ENCODE measurements at regions of chr2 and their contacts with region 1.

Region 1: GRCh38 chr2:172806493-172806892 is 70.8 kb downstream of the RAPGEF4 start:
- DNase-seq: peak; percentile 27 to 71
- H3K4me3 ChIP-seq: no peak overlapping the region
- H3K4me1 ChIP-seq: peaks cover 7% of the 10 kb centered on the region; the same call in 1 of the 2 replicates
- H3K27me3 ChIP-seq: no peaks in the 10 kb centered on the region

Region 2: DNA sequence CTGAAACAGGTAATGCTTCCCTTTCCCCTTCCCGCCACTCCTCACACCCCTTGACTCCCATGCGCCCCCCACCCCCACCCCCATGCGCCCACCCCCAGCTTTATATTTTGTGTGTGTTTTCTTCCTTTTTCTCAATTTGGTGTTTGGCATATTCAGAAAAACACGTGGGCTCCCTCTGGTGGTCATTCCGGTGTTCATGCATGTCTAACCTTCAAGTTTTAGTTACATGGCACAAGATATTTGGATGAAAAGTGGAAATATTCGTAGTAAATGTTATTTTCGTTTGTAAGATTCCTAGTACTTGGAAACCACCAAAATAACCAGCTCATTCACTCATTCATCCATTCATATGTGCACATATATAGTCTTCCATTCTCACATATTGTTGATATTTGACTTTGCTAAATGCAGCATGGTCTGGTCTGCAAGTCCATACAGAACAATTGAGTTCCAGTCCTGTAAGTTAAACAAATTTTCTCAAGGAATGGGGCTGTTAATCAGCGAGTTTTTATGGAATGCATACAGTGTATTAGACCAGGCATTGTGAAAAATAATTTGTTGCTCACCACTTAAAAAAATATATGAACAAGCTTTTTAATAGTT is 125.5 kb after region 1 on chr2:
- in situ Hi-C with region 1: loop called (anchors 5 kb)
- DNase-seq: peak; percentile 59 to 86
- H3K4me3 ChIP-seq: no peak overlapping the region
- H3K4me1 ChIP-seq: peaks cover 23% of the 10 kb centered on the region
- H3K27me3 ChIP-seq: no peaks in the 10 kb centered on the region

Region 3: GRCh38 chr2:173210270-173211196 is 404.0 kb after region 1 on chr2:
- in situ Hi-C with region 1: loop called (anchors 25 kb)
- DNase-seq: peak; percentile 74 to 77
- H3K4me3 ChIP-seq: no peak overlapping the region
- H3K4me1 ChIP-seq: peaks cover 3% of the 10 kb centered on the region
- H3K27me3 ChIP-seq: no peaks in the 10 kb centered on the region